ENCODE measurements at regions of chr5 and their contacts with region 1.

Region 1: DNA sequence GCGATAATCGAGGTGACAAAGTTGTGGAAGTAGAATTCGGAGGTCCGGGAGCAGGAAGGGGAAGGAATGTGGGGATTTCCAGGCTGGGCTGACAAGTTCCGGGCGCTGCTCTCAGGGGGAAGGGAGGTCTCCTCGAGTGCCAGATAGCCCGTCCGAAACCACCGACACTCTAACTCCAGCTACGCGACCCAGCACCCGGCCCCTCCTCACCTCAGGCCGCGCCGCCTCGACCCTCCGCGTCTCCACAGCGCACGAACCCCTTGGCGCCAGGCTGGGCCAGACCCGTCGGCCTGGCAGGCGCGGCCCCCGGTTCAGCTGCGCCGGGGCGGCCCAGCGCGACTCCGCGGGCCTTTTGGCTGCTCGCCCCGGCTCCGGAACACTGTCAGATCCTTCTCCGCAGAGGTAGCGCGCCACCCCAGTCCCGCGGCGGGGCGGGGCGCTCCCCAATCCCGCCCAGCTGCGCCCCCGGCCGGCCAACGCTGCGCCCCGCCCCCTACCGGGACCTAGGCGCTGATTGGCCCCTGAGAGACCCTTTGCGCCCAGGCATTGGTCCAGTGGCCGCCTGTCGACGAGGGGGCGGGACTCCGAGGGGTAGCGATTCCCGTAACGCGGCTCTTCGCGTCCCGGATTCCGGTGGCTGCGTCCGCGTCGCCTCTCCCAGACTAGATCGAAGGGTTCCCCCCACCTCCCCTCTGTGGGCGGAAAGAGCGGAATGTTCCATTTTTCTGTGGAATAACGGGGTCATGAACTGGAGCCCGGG is at the start of gene IL6ST:
- DNase-seq: peak; percentile 99
- ATAC-seq: peak; percentile 94
- H3K4me3 Mint-ChIP-seq: peak within 1 kb of the TSS; percentile 92
- H3K27ac Mint-ChIP-seq: peak within 1 kb of the TSS; percentile 94
- H3K4me1 Mint-ChIP-seq: peaks cover 39% of the 10 kb centered on the region
- H3K27me3 Mint-ChIP-seq: no peaks in the 10 kb centered on the region
- total RNA-seq, gene IL6ST: 46.1 to 48.9 TPM

Region 2: GRCh38 chr5:56012281-56012963 is 17.7 kb after region 1 on chr5:
- POLR2A ChIA-PET with region 1: interaction called, 31 read pairs
- DNase-seq: peak; percentile 39
- ATAC-seq: peak; percentile 96
- H3K4me3 Mint-ChIP-seq: peak overlapping the region; percentile 56
- H3K27ac Mint-ChIP-seq: peak overlapping the region; percentile 60
- H3K4me1 Mint-ChIP-seq: peaks cover 22% of the 10 kb centered on the region
- H3K27me3 Mint-ChIP-seq: no peaks in the 10 kb centered on the region

Region 3: GRCh38 chr5:56056875-56057274 is 62.1 kb after region 1 on chr5:
- POLR2A ChIA-PET with region 1: interaction called, 13 read pairs
- DNase-seq: no peak
- ATAC-seq: no peak
- H3K4me3 Mint-ChIP-seq: no peak overlapping the region
- H3K27ac Mint-ChIP-seq: no peak overlapping the region
- H3K4me1 Mint-ChIP-seq: peaks cover 44% of the 10 kb centered on the region
- H3K27me3 Mint-ChIP-seq: peaks cover 2% of the 10 kb centered on the region

Measured in activated naive CD8-positive, alpha-beta T cell treated with anti-CD3 and anti-CD28 coated beads, Interleukin-2, amount 10 ng/mL, durations not matched to agents 7 days and 5 days (primary cell).